Psoas muscle (tissue), 8 donors: ENCODE measurements at regions of chr4 and their contacts with region 1.

Region 1: GRCh38 chr4:144174401-144175067 is 34.0 kb upstream of the GYPA start:
- DNase-seq: no peak
- ATAC-seq: peak in 3 of 4 donors; percentile 53 to 74 (median 65)
- H3K4me3 ChIP-seq: no peak overlapping the region
- H3K27ac ChIP-seq: no peak overlapping the region
- H3K4me1 ChIP-seq: no peaks in the 10 kb centered on the region
- H3K27me3 ChIP-seq: no peaks in the 10 kb centered on the region
- CTCF ChIP-seq: peak; percentile 40

Region 2: GRCh38 chr4:144295286-144295995 is 120.9 kb after region 1 on chr4:
- intact Hi-C with region 1: no loop called
- DNase-seq: no peak
- ATAC-seq: no peak
- H3K4me3 ChIP-seq: no peak overlapping the region
- H3K27ac ChIP-seq: no peak overlapping the region
- H3K4me1 ChIP-seq: no peaks in the 10 kb centered on the region
- H3K27me3 ChIP-seq: no peaks in the 10 kb centered on the region
- CTCF ChIP-seq: no peak

Region 3: GRCh38 chr4:144421839-144422565 is 247.5 kb after region 1 on chr4:
- intact Hi-C with region 1: no loop called
- DNase-seq: no peak
- ATAC-seq: no peak
- H3K4me3 ChIP-seq: no peak overlapping the region
- H3K27ac ChIP-seq: no peak overlapping the region
- H3K4me1 ChIP-seq: no peaks in the 10 kb centered on the region
- H3K27me3 ChIP-seq: no peaks in the 10 kb centered on the region
- CTCF ChIP-seq: no peak

Region 4: DNA sequence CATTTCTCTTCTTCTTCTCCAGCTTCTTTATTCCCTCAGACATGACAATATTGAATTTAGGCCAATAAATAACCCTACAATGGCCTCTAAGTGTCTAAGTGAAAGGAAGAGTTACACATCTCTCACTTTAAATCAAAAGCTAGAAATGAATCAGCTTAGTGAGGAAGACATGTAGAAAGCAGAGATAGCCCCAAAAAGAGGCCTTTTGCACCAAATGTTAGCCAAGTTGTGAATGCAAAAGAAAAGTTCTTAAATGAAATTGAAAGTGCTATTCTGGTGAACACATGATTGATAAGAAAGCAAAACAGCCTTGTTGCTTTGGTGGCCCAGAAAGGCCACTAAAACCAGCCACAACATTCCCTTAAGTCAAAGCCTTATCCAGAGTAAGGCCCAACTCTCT is 325.2 kb after region 1 on chr4:
- intact Hi-C with region 1: no loop called
- DNase-seq: no peak
- ATAC-seq: no peak
- H3K4me3 ChIP-seq: no peak overlapping the region
- H3K27ac ChIP-seq: no peak overlapping the region
- H3K4me1 ChIP-seq: no peaks in the 10 kb centered on the region
- H3K27me3 ChIP-seq: no peaks in the 10 kb centered on the region
- CTCF ChIP-seq: no peak

Region 5: GRCh38 chr4:145061318-145061920 is 886.9 kb after region 1 on chr4:
- intact Hi-C with region 1: loop called (anchors 5 to 10 kb)
- DNase-seq: no peak
- ATAC-seq: peak in 3 of 4 donors; percentile 44 to 80 (median 66)
- H3K4me3 ChIP-seq: no peak overlapping the region
- H3K27ac ChIP-seq: no peak overlapping the region
- H3K4me1 ChIP-seq: no peaks in the 10 kb centered on the region
- H3K27me3 ChIP-seq: no peaks in the 10 kb centered on the region
- CTCF ChIP-seq: peak; percentile 62

Region 6: DNA sequence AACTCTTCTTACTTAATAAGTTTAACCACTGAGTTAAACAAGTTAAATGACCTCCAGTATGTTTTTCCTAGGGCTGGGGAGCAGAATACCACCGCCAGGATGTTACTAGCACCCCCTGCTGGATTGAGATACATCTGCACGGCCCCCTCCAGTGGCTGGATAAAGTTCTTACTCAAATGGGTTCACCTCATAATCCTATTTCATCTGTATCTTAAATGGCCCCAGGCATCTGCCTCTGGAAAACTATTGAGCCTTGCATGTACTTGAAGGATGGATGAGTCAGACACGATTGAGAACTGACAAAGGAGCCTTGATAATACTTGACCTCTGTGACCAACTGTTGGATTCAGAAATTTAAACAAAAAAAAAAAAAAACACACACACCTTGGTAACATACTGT is 1383.2 kb after region 1 on chr4:
- intact Hi-C with region 1: loop called in 1 of 2 experiments (anchors 5 kb)
- DNase-seq: peak; percentile 44 to 55
- ATAC-seq: peak; percentile 72 to 97 (median 88)
- H3K4me3 ChIP-seq: no peak overlapping the region
- H3K27ac ChIP-seq: no peak overlapping the region
- H3K4me1 ChIP-seq: no peaks in the 10 kb centered on the region
- H3K27me3 ChIP-seq: no peaks in the 10 kb centered on the region
- CTCF ChIP-seq: peak; percentile 89

Region 7: DNA sequence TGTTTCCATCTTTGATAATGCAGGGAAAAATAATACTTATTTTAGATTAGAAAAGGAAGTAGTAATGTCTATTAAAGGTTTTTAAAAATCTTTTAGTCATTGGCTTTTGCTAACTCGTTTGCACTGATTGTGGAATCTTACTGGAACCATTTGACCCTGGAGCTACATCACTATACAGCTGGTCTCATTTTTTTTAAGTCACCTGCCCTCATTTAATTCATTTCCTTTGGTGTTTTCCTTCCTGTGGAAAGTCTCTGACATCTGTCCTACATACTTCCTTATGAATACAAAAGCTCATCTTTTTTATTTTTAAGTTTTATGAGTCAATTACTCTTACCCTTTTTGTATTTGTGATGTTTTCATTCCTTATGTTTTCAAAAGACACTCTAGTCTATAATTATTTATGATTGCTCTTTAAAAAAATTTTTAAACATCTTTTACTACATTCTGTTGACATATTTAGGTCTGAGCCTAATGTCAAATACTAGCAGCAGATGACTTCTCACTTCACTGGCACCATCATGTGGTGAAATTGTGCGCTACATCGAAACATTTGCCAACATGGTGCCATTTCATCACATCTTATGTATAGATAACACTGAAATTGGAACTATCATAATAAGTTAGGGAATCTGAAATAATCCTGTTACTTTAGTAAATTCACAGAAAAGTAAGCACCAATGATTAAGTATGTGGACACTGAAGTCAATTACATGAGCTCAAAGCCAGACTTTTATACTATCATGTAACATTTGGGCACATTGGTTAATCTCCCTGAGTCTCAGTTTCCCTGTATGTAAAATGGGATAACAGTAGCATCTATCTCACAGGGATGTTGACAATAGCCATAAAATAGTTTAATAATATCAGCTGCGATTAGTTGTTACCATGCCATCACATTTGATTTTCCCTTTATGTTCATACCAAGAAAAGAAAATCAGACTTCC is 1435.2 kb after region 1 on chr4:
- intact Hi-C with region 1: loop called in 1 of 2 experiments (anchors 10 kb)
- DNase-seq: peak in 1 of 2 donors; percentile 24
- ATAC-seq: peak; percentile 52 to 78 (median 66)
- H3K4me3 ChIP-seq: no peak overlapping the region
- H3K27ac ChIP-seq: no peak overlapping the region
- H3K4me1 ChIP-seq: no peaks in the 10 kb centered on the region
- H3K27me3 ChIP-seq: no peaks in the 10 kb centered on the region
- CTCF ChIP-seq: peak; percentile 78